A673 (cell line): ENCODE measurements at regions of chr1 and their contacts with region 1.

Region 1: DNA sequence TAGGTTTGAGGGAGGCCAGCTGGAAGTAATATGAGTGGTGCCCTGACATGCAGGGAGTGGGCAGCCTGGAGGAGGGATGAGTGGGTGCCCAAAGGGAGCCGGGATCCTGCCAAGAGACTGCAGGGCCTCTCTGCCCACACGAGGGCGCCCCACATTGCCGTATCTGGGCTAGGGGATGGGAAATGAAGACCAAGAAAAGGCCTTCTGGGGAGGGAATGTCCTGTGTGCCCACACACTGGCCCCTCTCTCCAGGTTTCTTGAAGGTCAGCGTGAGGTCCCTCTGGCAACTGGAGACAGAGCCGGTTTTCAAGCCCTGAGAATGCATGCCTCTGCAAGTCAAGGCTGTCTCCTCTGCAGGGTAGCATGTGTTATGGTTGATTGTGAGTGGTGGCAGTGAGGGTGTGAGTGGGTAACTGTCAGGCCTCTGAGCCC is 94.1 kb upstream of the PPM1J start:
- DNase-seq: peak; percentile 73
- H3K4me3 ChIP-seq: no peak overlapping the region
- H3K27ac ChIP-seq: no peak overlapping the region
- H3K4me1 ChIP-seq: no peaks in the 10 kb centered on the region
- H3K27me3 ChIP-seq: peaks cover 32% of the 10 kb centered on the region
- CTCF ChIP-seq: peak; percentile 96

Region 2: DNA sequence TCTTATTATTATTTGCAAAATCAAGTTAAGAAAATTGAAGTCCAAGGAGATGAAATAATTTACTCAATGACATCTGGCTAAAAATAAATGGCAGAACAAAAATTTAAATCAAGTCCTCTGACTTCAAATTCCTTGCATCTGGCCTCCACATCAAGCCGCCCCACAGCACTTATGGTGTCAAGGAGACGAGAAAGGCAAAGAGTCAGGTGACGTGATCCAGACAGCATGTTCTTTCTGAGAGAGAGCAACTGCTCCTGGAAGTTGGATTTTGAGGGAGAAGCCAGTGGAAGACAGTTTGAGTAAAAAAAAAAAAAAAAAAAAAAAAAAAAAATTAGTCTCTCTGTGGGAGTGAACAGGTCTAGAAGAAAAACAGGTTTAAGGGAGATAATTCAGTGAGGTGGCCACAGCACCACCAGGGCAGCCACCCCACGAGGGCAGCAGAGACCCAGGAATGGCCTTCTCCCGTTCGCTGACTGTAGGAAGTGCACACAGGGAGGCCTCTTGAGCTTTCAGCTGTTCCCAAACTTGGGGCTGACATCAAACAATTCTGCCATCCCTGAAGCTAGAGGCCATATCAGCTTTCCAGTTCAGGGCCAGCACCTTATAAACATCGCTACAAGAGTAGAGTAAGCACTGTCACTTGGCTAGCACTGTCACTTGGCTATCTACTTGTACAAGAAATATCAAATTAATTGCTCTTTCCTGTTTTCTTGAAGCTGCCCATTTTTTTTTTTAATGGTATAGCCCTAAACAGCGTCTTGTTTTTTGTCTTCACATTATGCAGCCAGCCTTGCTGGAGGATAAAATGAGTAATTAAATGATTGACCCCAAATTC is 1327.7 kb before region 1 on chr1:
- CTCF ChIA-PET with region 1: no interaction called
- POLR2A ChIA-PET with region 1: no interaction called
- intact Hi-C with region 1: no loop called
- DNase-seq: peak; percentile 43
- H3K4me3 ChIP-seq: no peak overlapping the region
- H3K27ac ChIP-seq: no peak overlapping the region
- H3K4me1 ChIP-seq: no peaks in the 10 kb centered on the region
- H3K27me3 ChIP-seq: no peaks in the 10 kb centered on the region
- CTCF ChIP-seq: peak; percentile 45

Region 3: GRCh38 chr1:113042285-113043143 is 233.2 kb after region 1 on chr1:
- CTCF ChIA-PET with region 1: no interaction called
- POLR2A ChIA-PET with region 1: no interaction called
- intact Hi-C with region 1: loop called (anchors 1 kb)
- DNase-seq: peak; percentile 64
- H3K4me3 ChIP-seq: no peak overlapping the region
- H3K27ac ChIP-seq: no peak overlapping the region
- H3K4me1 ChIP-seq: no peaks in the 10 kb centered on the region
- H3K27me3 ChIP-seq: no peaks in the 10 kb centered on the region
- CTCF ChIP-seq: peak; percentile 54

Region 4: DNA sequence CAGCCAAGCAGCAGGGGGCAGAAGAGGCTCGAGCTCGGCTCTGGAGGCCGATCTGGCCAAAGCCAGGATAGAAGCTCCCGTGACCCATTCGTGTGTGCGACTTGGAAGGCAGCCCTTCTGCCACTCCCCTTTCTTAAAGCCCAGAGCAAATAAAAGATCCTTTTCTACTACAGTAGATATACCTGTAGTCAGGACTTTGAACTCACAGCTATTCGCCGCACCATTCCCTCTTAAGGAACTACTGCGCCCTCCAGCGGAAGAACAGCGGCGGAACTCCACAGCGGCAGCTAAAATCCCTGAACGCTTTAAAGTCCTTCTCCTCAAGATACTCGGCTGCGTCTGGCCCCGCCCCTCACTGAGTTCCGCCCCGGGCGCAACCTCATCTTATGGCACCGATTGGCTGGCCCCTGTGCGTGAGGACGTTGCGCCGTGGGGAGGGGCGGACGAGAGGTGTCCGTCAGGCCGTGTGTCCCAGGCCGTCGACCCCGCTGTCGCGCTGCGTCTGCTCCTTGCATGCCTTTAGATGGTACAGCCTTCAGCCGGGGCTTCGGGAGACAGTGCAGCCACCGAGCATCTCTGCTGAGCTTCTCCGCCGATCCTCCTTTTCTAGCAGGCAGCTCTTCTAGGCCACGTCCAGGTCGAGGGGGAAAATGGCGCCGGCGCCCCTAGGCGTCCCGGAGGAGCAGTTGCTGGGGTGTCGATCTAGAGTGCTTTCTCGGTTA is 263.6 kb after region 1 on chr1 and contains the start of gene LRIG2:
- CTCF ChIA-PET with region 1: interaction called, 5 read pairs
- POLR2A ChIA-PET with region 1: interaction called, 13 read pairs
- intact Hi-C with region 1: no loop called
- DNase-seq: peak; percentile 99
- H3K4me3 ChIP-seq: peak within 1 kb of the TSS; percentile 71
- H3K27ac ChIP-seq: peak within 1 kb of the TSS; percentile 75
- H3K4me1 ChIP-seq: peaks cover 10% of the 10 kb centered on the region
- H3K27me3 ChIP-seq: no peaks in the 10 kb centered on the region
- CTCF ChIP-seq: peak; percentile 98
- total RNA-seq, gene LRIG2: 13.9 and 14.8 TPM in 2 replicates

Region 5: DNA sequence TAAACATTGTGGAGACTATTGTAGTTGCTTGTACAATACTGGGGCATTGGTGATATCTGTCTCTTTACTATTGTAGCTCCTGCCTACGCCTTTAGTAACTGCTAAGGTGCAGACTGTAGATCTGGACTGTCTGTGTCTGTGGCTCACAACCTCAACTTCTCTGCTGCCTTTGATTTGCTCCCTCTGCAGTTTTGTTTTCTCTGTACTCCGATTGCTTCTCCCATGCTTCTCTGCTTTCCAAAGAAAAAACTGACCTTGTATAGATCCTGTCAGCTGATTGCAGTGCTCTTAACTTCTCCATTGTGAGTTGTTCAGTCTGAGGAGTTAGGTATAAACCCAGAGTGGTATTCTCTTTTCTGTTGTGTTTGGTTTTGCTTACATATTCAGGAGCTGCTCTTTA is 596.3 kb after region 1 on chr1:
- CTCF ChIA-PET with region 1: no interaction called
- POLR2A ChIA-PET with region 1: no interaction called
- intact Hi-C with region 1: no loop called
- DNase-seq: no peak
- H3K4me3 ChIP-seq: no peak overlapping the region
- H3K27ac ChIP-seq: no peak overlapping the region
- H3K4me1 ChIP-seq: peaks cover 4% of the 10 kb centered on the region
- H3K27me3 ChIP-seq: peaks cover 15% of the 10 kb centered on the region
- CTCF ChIP-seq: no peak

Region 6: GRCh38 chr1:113660088-113660487 is 850.8 kb after region 1 on chr1:
- CTCF ChIA-PET with region 1: no interaction called
- POLR2A ChIA-PET with region 1: no interaction called
- intact Hi-C with region 1: no loop called
- DNase-seq: peak; percentile 29
- H3K4me3 ChIP-seq: no peak overlapping the region
- H3K27ac ChIP-seq: no peak overlapping the region
- H3K4me1 ChIP-seq: no peaks in the 10 kb centered on the region
- H3K27me3 ChIP-seq: no peaks in the 10 kb centered on the region
- CTCF ChIP-seq: no peak